ENCODE measurements at regions of chr3 and their contacts with region 1.

Region 1: GRCh38 chr3:190780524-190780923 is 82.0 kb downstream of the GMNC start:
- DNase-seq: no peak
- ATAC-seq: no peak
- H3K4me3 ChIP-seq: no peak overlapping the region
- H3K27ac ChIP-seq: no peak overlapping the region
- H3K4me1 ChIP-seq: no peaks in the 10 kb centered on the region
- H3K27me3 ChIP-seq: no peaks in the 10 kb centered on the region
- CTCF ChIP-seq: no peak

Region 2: DNA sequence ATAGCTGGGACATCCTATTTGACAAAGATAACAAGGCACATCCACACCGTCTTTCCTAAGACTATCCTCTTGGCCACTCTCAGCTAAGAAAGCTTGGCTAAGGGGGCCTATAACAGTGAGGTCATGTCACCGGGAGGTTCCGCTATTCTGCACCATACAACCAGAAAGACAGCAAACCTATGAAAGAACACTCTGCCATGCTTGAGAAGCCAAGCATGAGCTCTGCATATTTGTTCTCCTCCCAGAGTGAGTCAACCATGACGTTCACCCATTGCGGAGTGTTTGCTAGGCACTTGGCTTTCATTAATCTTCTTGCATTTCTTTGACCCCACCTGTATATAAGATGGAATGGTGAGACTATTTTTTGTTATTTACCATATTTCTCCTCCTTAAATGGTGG is 59.2 kb before region 1 on chr3:
- intact Hi-C with region 1: no loop called
- DNase-seq: no peak
- ATAC-seq: no peak
- H3K4me3 ChIP-seq: no peak overlapping the region
- H3K27ac ChIP-seq: no peak overlapping the region
- H3K4me1 ChIP-seq: no peaks in the 10 kb centered on the region
- H3K27me3 ChIP-seq: no peaks in the 10 kb centered on the region
- CTCF ChIP-seq: no peak

Region 3: DNA sequence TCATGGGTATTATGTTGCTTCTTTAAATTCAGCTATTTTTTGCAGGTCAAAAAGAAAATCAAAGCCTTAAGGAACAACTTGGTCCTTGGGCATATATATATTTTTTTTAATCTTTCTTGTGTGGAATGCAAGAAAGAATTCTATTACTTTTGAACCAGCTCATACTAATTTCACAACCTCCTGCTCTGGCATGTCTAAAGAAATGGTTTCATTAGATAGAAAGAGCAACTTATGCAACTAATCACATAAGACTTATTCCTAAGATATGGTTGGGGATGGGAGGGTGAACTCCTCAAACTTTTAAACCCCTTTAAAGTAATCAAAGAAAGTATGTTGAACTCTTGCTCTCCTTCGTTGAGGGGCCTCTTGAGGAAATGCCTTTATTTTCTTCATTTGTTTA is 33.0 kb before region 1 on chr3:
- intact Hi-C with region 1: no loop called
- DNase-seq: no peak
- ATAC-seq: no peak
- H3K4me3 ChIP-seq: no peak overlapping the region
- H3K27ac ChIP-seq: no peak overlapping the region
- H3K4me1 ChIP-seq: no peaks in the 10 kb centered on the region
- H3K27me3 ChIP-seq: no peaks in the 10 kb centered on the region
- CTCF ChIP-seq: no peak

Region 4: DNA sequence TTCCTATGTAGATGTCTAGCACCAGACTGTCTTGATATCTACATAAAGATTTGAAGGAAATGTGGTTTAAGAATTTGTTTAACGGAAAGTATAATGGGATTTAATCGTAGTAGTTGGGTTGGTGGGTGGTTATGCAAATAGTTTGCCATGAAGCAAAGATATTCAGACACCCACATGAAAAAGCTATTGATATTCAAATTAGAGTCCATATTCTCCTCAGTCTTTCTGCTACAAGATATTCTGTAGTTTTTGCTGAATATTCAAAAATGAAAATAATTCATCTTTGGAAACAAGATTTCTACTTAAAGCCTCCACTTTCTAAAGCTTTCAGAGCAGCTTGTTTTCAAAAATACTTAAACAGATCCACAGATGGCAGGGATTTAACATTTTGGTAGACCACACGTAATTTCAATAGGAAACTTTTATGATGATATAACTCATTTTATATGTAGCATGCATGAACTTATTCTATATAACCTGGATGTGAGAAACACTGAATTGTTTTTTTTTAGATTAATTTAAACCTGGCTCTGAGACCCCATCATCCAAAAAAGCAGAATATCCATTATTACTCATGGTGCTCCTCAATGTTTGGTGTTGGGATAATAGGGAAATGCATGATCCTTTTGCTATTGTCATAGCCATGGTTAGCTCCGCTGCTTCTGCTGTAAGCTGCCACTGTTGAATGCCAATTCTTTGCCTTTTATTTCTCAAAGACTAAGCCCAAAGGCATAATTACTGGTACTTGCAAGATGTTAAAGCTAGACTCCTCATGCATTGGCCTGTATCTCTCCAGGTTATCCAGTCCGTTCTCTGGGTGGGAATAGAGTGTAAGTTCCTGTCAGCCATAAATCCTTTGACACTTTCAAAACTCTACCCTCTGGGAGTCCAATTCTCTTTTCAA is 16.0 kb before region 1 on chr3:
- intact Hi-C with region 1: loop called in 1 of 2 experiments (anchors 1 kb)
- DNase-seq: no peak
- ATAC-seq: no peak
- H3K4me3 ChIP-seq: no peak overlapping the region
- H3K27ac ChIP-seq: no peak overlapping the region
- H3K4me1 ChIP-seq: no peaks in the 10 kb centered on the region
- H3K27me3 ChIP-seq: no peaks in the 10 kb centered on the region
- CTCF ChIP-seq: no peak

Measured in psoas muscle (tissue), 8 donors.